ENCODE measurements at regions of chr15 and their contacts with region 1.

Region 1: DNA sequence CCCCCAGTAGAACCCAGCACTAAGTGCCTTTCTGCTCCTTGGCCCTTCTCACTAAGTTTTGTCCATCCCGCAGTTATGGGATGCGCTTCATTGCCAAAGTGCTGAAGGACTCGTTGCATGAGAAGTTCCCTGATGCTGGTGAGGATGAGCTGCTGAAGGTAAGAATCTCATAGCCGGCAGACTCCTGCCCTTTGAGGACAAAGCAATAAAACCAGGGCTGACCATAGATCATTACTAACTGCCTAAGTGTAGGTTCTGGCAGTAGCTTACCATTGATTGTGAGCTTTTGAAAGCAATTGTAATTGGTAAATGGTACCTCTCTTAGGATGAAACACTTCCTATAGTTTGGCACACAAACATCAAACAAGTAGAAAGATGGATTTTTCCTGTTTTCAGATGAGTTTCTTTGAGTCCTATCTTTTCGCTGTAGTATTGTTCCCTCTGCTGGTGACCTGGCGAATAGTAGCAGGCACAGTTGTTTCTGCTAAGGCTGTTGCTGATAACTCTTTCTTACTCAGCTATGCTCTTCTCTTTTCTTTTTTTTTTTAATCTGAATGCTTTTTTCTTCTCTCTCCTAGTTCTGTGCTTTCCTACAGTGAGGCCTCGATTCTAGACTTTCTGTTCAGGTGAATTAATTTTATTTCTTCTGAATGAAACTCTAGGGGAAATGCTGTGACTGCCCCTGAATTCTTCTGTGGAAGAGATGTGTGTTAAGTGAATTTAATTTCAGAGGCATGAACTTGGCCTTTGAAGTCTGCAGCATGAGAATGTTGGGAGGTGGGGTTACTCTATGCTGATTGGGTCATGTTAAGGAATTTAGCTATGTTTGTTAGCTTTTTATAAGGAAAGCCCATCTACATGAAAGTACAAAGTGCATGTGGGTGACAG is 47.4 kb upstream of the CRTC3 start:
- DNase-seq: peak; percentile 54
- H3K4me3 ChIP-seq: no peak overlapping the region; a peak in 1 of 4 replicates
- H3K27ac ChIP-seq: peak overlapping the region in 1 of 2 experiments; percentile 9; a peak in 3 of 4 replicates
- H3K4me1 ChIP-seq: peaks cover 0 to 17% of the 10 kb centered on the region in 2 experiments; a peak in 3 of 4 replicates
- H3K27me3 ChIP-seq: no peaks in the 10 kb centered on the region
- CTCF ChIP-seq: peak; percentile 89
- EP300 ChIP-seq: no peak
- RAD21 ChIP-seq: peak; percentile 92

Region 2: GRCh38 chr15:90306560-90306959 is 175.8 kb before region 1 on chr15:
- CTCF ChIA-PET with region 1: interaction called, 15 read pairs
- POLR2A ChIA-PET with region 1: no interaction called
- DNase-seq: no peak
- H3K4me3 ChIP-seq: no peak overlapping the region
- H3K27ac ChIP-seq: no peak overlapping the region
- H3K4me1 ChIP-seq: peaks cover 0 to under 1% of the 10 kb centered on the region in 2 experiments; a peak in 1 of 4 replicates
- H3K27me3 ChIP-seq: no peaks in the 10 kb centered on the region
- CTCF ChIP-seq: no peak
- EP300 ChIP-seq: no peak
- RAD21 ChIP-seq: no peak

Region 3: GRCh38 chr15:90362936-90363212 is 119.5 kb before region 1 on chr15:
- CTCF ChIA-PET with region 1: interaction called, 36 read pairs
- POLR2A ChIA-PET with region 1: no interaction called
- DNase-seq: no peak
- H3K4me3 ChIP-seq: no peak overlapping the region
- H3K27ac ChIP-seq: peak overlapping the region; percentile 76 to 91
- H3K4me1 ChIP-seq: peaks cover 0 to 19% of the 10 kb centered on the region in 2 experiments
- H3K27me3 ChIP-seq: no peaks in the 10 kb centered on the region
- CTCF ChIP-seq: no peak
- EP300 ChIP-seq: no peak; a peak in 1 of 4 replicates
- RAD21 ChIP-seq: no peak

Region 4: GRCh38 chr15:90463381-90463780 is 19.0 kb before region 1 on chr15:
- CTCF ChIA-PET with region 1: interaction called, 23 read pairs
- POLR2A ChIA-PET with region 1: no interaction called
- DNase-seq: no peak
- H3K4me3 ChIP-seq: 0 out of 4 replicates have a peak overlapping the region, but pooled peaks of 1 of the 2 experiments have one; percentile 5
- H3K27ac ChIP-seq: peak overlapping the region; percentile 50 to 91; a peak in 3 of 4 replicates
- H3K4me1 ChIP-seq: peaks cover 0 to 35% of the 10 kb centered on the region in 2 experiments; a peak in 2 of 4 replicates
- H3K27me3 ChIP-seq: no peaks in the 10 kb centered on the region
- CTCF ChIP-seq: peak; percentile 32
- EP300 ChIP-seq: no peak
- RAD21 ChIP-seq: no peak

Region 5: GRCh38 chr15:90629217-90629616 is 146.8 kb after region 1 on chr15:
- CTCF ChIA-PET with region 1: no interaction called
- POLR2A ChIA-PET with region 1: no interaction called
- DNase-seq: no peak
- H3K4me3 ChIP-seq: no peak overlapping the region
- H3K27ac ChIP-seq: no peak overlapping the region
- H3K4me1 ChIP-seq: no peaks in the 10 kb centered on the region
- H3K27me3 ChIP-seq: no peaks in the 10 kb centered on the region
- CTCF ChIP-seq: no peak
- EP300 ChIP-seq: no peak
- RAD21 ChIP-seq: no peak

Region 6: DNA sequence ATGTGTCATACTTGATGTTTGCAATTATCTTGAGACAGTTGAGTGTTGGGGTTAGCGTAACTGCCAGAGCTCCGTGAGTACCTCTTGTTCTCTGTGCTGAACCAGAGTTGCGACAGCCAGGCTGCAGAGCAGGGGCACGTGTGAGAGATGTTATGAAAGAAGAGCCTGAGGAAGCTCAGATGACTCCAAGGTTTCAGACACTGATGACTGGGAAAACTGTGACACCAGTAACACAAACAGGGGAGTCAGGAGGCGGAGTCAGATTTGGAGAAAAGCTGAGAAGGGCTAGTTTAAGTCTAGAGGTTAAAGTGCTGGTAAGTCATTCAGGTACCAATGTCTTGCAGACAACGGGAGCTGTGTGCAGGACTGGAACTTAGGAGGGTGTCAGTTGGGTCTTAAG is 279.7 kb after region 1 on chr15:
- CTCF ChIA-PET with region 1: no interaction called
- POLR2A ChIA-PET with region 1: no interaction called
- DNase-seq: no peak
- H3K4me3 ChIP-seq: no peak overlapping the region
- H3K27ac ChIP-seq: no peak overlapping the region
- H3K4me1 ChIP-seq: peaks cover 0 to 5% of the 10 kb centered on the region in 2 experiments; a peak in 1 of 4 replicates
- H3K27me3 ChIP-seq: no peaks in the 10 kb centered on the region
- CTCF ChIP-seq: no peak
- EP300 ChIP-seq: no peak
- RAD21 ChIP-seq: no peak

Region 7: GRCh38 chr15:90886041-90886614 is 403.8 kb after region 1 on chr15:
- CTCF ChIA-PET with region 1: interaction called, 11 read pairs
- POLR2A ChIA-PET with region 1: no interaction called
- DNase-seq: peak; percentile 91
- H3K4me3 ChIP-seq: peak overlapping the region in 1 of 2 experiments; percentile 47; a peak in 1 of 4 replicates
- H3K27ac ChIP-seq: no peak overlapping the region
- H3K4me1 ChIP-seq: peaks cover 0 to 14% of the 10 kb centered on the region in 2 experiments; a peak in 1 of 4 replicates
- H3K27me3 ChIP-seq: no peaks in the 10 kb centered on the region
- CTCF ChIP-seq: peak; percentile 99
- EP300 ChIP-seq: no peak
- RAD21 ChIP-seq: peak; percentile 96

Measured in SK-N-SH (cell line).